ENCODE measurements at regions of chr11 and their contacts with region 1.

Region 1: DNA sequence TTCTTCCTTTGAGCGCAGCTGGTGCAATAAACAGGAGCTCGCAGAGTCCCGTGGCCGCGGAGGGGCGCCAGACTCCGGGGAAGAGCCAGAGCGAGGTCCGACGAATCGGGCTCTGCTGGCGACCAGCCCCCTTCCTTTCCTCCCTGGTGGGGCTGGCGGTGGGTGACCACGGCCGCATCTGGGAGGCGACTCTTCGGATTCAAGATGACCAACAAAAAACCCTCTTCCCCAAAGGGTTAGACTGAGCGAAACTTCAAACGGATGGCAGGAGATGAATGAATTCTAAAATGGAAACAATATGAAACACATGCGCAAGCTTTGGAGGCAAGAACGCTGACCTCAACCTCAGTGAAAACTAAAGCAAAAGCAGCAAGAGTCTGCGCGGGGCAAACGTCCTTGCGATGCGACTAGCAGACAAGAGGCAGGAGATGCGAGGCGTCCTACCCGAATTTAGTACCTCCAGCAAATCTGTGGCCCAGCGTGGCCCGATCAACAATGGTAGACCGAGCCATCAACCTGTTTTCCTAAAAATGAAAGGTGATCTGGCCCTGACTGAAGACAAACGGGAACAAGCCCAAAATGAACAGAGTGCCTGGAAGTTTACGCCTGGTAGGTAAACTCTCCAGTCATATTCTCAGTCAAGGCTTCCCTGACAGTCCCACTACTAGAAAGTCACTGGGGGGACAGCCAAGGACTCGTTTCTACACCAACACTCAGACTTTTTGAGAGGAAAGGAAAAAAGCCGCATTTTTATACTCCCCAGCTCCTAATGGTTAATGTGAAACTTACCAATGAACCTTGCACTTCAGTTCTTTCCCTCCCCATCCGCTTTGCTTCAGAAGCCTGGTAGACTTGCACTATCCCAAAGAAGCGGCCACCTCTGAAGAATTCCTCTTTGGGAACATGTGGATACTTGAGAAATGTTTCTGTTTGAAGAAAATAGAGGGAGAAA is 11.6 kb downstream of the MMP3 start:
- DNase-seq: peak in 1 of 2 donors; percentile 23
- ATAC-seq: no peak
- H3K4me3 ChIP-seq: peak overlapping the region in 2 of 10 donors; percentile 7 to 21
- H3K27ac ChIP-seq: no peak overlapping the region
- H3K4me1 ChIP-seq: no peaks in the 10 kb centered on the region
- H3K27me3 ChIP-seq: peaks cover 0 to 34% (median 13%) of the 10 kb centered on the region in 7 donors
- CTCF ChIP-seq: peak in 5 of 9 donors; percentile 7 to 23 (median 17)

Region 2: DNA sequence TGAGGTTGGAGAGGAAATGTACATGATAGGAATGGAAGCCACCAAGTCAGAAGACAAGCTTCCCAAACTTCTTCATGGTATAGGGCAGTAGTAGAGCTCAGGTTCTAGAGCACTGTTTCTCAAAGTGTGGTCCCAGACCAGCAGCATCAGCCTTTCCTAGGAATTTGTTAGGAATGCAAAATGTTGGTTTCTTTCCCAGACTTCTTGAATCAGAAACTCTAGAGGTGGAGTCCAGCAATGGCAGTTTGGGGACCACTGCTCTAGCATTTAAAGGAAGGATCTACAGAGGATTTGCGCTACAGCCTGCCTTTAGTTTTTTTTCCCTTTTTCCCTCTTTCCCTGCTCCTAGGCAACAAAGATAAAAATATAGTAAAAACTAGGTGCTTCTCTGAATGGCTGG is 60.0 kb after region 1 on chr11:
- intact Hi-C with region 1: loop called in 1 of 10 experiments (anchors 10 kb)
- DNase-seq: no peak
- ATAC-seq: no peak
- H3K4me3 ChIP-seq: no peak overlapping the region
- H3K27ac ChIP-seq: no peak overlapping the region
- H3K4me1 ChIP-seq: no peaks in the 10 kb centered on the region
- H3K27me3 ChIP-seq: no peaks in the 10 kb centered on the region
- CTCF ChIP-seq: no peak

Measured in heart right ventricle (tissue), 16 donors.